Ovary (tissue), 10 donors: ENCODE measurements at regions of chr1 and their contacts with region 1.

Region 1: GRCh38 chr1:13950637-13951036 is 250.6 kb downstream of the PRDM2 start:
- DNase-seq: no peak
- H3K4me3 ChIP-seq: no peak overlapping the region
- H3K27ac ChIP-seq: peak overlapping the region; percentile 70 to 92
- H3K4me1 ChIP-seq: peaks cover 11% of the 10 kb centered on the region
- H3K27me3 ChIP-seq: no peaks in the 10 kb centered on the region
- CTCF ChIP-seq: no peak
- EP300 ChIP-seq: no peak
- POLR2A ChIP-seq: no peak

Region 2: DNA sequence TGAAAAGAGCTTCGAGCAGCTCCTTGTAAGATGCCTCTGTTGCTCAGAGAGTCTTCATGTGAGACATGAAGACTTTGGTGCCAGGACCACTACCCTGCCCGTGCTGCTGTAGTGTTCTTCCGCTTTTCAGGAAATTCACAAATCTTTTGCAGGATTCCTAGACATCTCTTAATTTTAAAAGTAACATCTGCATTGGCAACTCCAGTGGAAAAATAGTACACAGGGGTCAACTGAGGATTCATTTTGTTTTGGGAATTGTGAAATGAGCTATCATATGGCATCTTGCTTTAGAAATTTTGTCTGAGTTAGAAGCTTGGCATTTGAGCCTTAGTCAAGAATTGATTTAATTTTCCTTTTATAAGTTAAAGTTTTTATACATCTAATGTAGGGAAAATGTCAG is 243.5 kb before region 1 on chr1:
- intact Hi-C with region 1: no loop called
- DNase-seq: no peak
- H3K4me3 ChIP-seq: no peak overlapping the region
- H3K27ac ChIP-seq: no peak overlapping the region
- H3K4me1 ChIP-seq: peaks cover 9% of the 10 kb centered on the region
- H3K27me3 ChIP-seq: no peaks in the 10 kb centered on the region
- CTCF ChIP-seq: no peak
- EP300 ChIP-seq: no peak
- POLR2A ChIP-seq: no peak

Region 3: DNA sequence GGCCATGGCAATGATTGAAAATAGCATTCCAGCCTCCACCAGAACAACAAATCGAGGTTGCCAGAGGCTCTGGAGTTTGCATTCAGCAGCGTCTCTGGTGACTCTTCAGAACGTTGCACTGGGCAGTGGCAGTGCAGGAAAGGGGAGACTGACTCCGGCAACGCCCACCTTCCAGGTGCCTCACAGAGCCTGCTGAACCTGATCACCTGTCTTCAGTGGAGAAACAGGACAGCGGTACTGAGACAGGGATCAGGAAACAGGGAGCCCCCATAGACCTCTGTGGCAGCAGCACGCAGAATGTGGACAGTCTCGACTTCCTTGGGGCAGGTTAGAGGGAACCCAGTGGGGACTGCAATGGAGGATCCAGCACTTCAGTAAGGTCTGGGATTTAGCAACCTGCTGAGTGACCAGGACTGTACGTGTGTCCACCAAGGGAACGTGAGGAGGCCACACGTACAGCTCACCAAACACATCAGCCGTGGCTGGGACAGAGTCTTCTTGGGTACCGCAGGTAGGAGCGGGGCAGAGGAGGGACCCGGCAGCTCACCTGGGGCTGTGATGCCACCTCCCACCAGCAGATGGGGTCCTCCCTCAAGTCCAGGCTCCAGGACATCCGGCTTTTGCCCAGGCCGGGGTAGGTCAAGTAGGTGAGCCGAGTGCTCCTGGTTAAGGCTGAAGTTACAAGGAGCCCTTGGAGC is 122.0 kb before region 1 on chr1:
- intact Hi-C with region 1: loop called in 2 of 4 experiments (anchors 5 to 10 kb)
- DNase-seq: peak; percentile 55 to 78 (median 58)
- H3K4me3 ChIP-seq: no peak overlapping the region
- H3K27ac ChIP-seq: no peak overlapping the region
- H3K4me1 ChIP-seq: peaks cover 7% of the 10 kb centered on the region
- H3K27me3 ChIP-seq: no peaks in the 10 kb centered on the region
- CTCF ChIP-seq: peak in 2 of 3 donors; percentile 58 to 61
- EP300 ChIP-seq: no peak
- POLR2A ChIP-seq: no peak

Region 4: GRCh38 chr1:13871886-13872285 is 78.8 kb before region 1 on chr1:
- intact Hi-C with region 1: no loop called
- DNase-seq: no peak
- H3K4me3 ChIP-seq: no peak overlapping the region
- H3K27ac ChIP-seq: no peak overlapping the region
- H3K4me1 ChIP-seq: no peaks in the 10 kb centered on the region
- H3K27me3 ChIP-seq: no peaks in the 10 kb centered on the region
- CTCF ChIP-seq: no peak
- EP300 ChIP-seq: no peak
- POLR2A ChIP-seq: no peak

Region 5: DNA sequence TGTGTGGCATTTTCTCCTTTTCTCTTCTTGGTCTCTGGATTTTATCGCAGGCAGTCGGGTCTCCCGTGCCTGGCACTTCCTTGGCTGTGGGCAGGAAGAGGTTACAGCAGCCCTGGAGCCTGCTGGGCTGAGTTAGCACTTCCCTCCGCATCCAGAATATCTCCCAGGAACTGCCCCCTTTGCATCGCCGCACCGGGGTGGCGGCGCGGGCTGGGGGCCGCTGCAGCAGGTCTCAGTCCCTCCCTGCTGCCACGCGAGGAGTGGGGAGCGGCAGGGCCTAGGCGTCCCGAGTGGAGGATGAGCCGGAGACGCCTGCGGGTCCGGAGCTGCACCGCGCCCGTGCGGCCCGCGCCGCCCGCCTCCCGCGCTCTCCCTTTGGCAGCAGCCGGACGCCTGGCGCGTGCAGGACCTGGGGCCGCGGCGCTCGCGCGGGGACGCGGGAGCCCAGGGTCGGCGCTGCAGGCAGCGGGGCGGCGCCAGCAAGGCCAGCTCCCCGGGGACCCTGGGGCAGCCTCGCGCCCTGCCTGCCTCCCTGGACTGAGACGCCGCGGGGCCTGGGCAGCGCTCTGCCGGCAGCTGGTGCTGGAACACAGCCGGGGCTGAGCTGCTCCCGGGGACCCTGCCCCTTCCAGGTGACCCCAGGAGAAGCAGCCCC is 57.8 kb before region 1 on chr1:
- intact Hi-C with region 1: loop called in 2 of 4 experiments (anchors 5 to 10 kb)
- DNase-seq: peak; percentile 28 to 65 (median 46)
- H3K4me3 ChIP-seq: peak overlapping the region; percentile 29
- H3K27ac ChIP-seq: peak overlapping the region in 1 of 2 donors; percentile 67
- H3K4me1 ChIP-seq: peaks cover 3% of the 10 kb centered on the region
- H3K27me3 ChIP-seq: no peaks in the 10 kb centered on the region
- CTCF ChIP-seq: no peak
- EP300 ChIP-seq: no peak
- POLR2A ChIP-seq: no peak